Breast epithelium (tissue), 4 donors: ENCODE measurements at regions of chr6 and their contacts with region 1.

Region 1: GRCh38 chr6:112639391-112639831 is 292.3 kb downstream of the RFPL4B start:
- DNase-seq: no peak
- H3K4me3 ChIP-seq: no peak overlapping the region
- H3K27ac ChIP-seq: no peak overlapping the region
- H3K4me1 ChIP-seq: no peaks in the 10 kb centered on the region
- H3K27me3 ChIP-seq: no peaks in the 10 kb centered on the region
- CTCF ChIP-seq: no peak
- POLR2A ChIP-seq: no peak

Region 2: DNA sequence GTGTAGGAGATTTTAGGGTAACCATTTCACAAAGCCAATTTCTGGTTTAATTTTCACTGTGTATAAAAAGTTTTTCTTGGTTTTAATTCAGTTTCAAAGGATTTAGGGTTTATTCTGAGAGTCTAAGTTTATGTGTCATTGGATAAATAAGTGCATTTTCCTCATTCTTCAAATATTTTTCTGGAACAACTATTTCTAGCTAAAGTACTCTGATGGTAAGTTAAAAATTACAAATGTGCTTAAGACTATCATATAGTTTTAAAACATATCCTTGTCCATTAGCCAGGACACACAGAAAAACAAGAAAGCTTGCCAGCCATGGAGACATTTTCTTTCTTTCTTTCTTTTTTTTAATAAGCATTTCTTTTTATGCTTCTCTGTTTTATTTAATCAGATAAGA is 40.7 kb after region 1 on chr6:
- intact Hi-C with region 1: no loop called
- DNase-seq: no peak
- H3K4me3 ChIP-seq: no peak overlapping the region
- H3K27ac ChIP-seq: no peak overlapping the region
- H3K4me1 ChIP-seq: no peaks in the 10 kb centered on the region
- H3K27me3 ChIP-seq: no peaks in the 10 kb centered on the region
- CTCF ChIP-seq: no peak
- POLR2A ChIP-seq: no peak

Region 3: DNA sequence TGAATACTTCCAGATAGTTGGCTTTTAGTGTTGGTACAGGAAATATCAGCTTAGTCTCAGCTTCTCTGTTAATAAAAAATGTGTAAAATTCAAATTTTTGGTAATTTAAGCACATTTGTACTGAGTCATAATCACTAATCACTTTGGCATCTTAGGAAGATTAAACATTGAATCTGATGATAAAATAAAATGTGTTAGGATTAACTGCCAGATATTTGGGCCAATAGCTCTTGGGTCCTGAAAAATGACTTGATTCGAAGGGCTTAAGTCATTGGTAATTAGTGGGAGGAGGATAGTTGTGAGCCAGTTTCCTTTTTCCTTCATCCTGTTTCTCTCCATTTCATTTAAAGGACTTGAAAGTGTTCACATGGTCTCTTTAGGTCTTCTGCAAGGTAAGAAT is 133.8 kb after region 1 on chr6:
- intact Hi-C with region 1: no loop called
- DNase-seq: no peak
- H3K4me3 ChIP-seq: no peak overlapping the region
- H3K27ac ChIP-seq: no peak overlapping the region
- H3K4me1 ChIP-seq: no peaks in the 10 kb centered on the region
- H3K27me3 ChIP-seq: no peaks in the 10 kb centered on the region
- CTCF ChIP-seq: no peak
- POLR2A ChIP-seq: no peak

Region 4: DNA sequence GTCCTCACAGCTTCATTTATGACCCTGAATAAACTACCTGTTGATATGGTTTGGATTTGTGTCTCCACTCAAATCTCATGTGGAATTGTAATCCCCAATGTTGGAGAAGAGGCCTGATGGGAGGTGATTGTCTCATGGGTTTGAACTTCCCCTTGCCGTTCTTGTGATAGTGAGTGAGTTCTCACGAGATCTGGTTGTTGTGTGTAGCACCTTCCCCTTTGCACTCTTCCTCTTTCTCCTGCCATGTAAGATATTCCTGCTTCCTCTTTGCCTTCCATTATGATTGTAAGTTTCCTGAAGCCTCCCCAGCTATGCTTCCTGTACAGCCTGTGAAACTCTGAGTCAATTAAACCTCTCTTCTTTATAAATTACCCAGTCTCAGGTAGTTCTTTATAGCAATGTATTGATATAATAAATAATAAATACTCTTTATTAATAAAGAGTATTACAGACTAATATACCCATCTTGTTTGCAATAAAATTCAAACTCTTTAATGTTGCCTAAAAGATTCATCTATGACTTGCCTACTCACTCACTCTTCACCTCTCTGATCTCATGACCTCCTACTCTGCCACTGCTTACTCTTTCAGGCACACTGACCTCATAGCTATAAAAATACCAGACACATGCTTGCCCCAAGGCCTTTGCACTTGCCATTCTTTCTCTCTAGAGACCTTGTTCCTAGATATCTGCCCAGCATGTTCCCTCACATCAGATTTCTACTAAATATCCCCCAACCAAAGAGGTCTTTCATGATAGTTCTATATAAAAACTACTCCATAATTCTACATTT is 961.3 kb after region 1 on chr6:
- intact Hi-C with region 1: loop called (anchors 5 kb)
- DNase-seq: no peak
- H3K4me3 ChIP-seq: no peak overlapping the region
- H3K27ac ChIP-seq: no peak overlapping the region
- H3K4me1 ChIP-seq: no peaks in the 10 kb centered on the region
- H3K27me3 ChIP-seq: no peaks in the 10 kb centered on the region
- CTCF ChIP-seq: no peak
- POLR2A ChIP-seq: no peak